ENCODE measurements at regions of chr18 and their contacts with region 1.

Region 1: GRCh38 chr18:35573531-35573930 is 8.0 kb upstream of the GALNT1 start:
- DNase-seq: no peak
- ATAC-seq: no peak
- H3K4me3 ChIP-seq: no peak overlapping the region
- H3K27ac ChIP-seq: no peak overlapping the region
- H3K4me1 ChIP-seq: peaks cover 2% of the 10 kb centered on the region
- H3K27me3 ChIP-seq: no peaks in the 10 kb centered on the region
- CTCF ChIP-seq: no peak
- POLR2A ChIP-seq: no peak
- RAD21 ChIP-seq: no peak

Region 2: DNA sequence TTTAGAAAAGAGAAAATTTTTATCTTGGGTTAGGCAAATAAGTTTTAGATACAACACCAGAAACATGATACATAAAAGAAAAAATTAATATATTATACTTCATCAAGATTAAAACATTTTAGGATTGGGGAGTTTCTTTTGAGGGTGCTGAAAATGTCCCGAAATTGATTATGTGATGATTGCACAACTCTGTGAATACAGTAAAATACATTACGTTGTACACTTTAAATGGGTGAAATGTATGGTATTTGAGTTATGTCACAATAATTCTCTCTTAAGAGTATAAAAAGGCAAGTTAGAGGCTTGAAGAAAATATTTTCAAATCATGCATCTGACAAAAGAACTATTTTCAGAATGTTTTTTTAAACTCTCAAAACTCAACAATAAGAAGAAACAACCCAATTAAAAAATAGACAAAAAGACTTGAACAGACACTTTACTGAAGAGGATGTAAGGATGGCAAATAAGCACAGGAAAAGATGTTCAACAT is 39.6 kb before region 1 on chr18:
- CTCF ChIA-PET with region 1: no interaction called
- POLR2A ChIA-PET with region 1: no interaction called
- dilution Hi-C with region 1: no loop called
- in situ Hi-C with region 1: no loop called
- intact Hi-C with region 1: loop called (anchors 5 kb)
- DNase-seq: no peak
- ATAC-seq: no peak
- H3K4me3 ChIP-seq: no peak overlapping the region
- H3K27ac ChIP-seq: no peak overlapping the region
- H3K4me1 ChIP-seq: no peaks in the 10 kb centered on the region
- H3K27me3 ChIP-seq: peaks cover 3% of the 10 kb centered on the region
- CTCF ChIP-seq: no peak
- POLR2A ChIP-seq: no peak
- RAD21 ChIP-seq: no peak

Region 3: GRCh38 chr18:35616664-35617423 is 43.3 kb after region 1 on chr18:
- CTCF ChIA-PET with region 1: no interaction called
- POLR2A ChIA-PET with region 1: no interaction called
- dilution Hi-C with region 1: no loop called
- in situ Hi-C with region 1: no loop called
- intact Hi-C with region 1: no loop called
- DNase-seq: peak; percentile 92
- ATAC-seq: peak; percentile 90
- H3K4me3 ChIP-seq: peak overlapping the region; percentile 16; the same call in 1 of the 2 replicates
- H3K27ac ChIP-seq: no peak overlapping the region
- H3K4me1 ChIP-seq: peaks cover 7% of the 10 kb centered on the region
- H3K27me3 ChIP-seq: no peaks in the 10 kb centered on the region
- CTCF ChIP-seq: no peak
- POLR2A ChIP-seq: no peak
- RAD21 ChIP-seq: no peak